PC-3 (cell line): ENCODE measurements at regions of chr20 and their contacts with region 1.

Region 1: GRCh38 chr20:3710703-3711483 is 1.5 kb downstream of the SIGLEC1 start:
- DNase-seq: peak; percentile 61
- ATAC-seq: peak; percentile 33
- H3K4me3 ChIP-seq: no peak overlapping the region
- H3K27ac ChIP-seq: no peak overlapping the region
- H3K4me1 ChIP-seq: no peaks in the 10 kb centered on the region
- H3K27me3 ChIP-seq: no peaks in the 10 kb centered on the region
- CTCF ChIP-seq: peak; percentile 98

Region 2: DNA sequence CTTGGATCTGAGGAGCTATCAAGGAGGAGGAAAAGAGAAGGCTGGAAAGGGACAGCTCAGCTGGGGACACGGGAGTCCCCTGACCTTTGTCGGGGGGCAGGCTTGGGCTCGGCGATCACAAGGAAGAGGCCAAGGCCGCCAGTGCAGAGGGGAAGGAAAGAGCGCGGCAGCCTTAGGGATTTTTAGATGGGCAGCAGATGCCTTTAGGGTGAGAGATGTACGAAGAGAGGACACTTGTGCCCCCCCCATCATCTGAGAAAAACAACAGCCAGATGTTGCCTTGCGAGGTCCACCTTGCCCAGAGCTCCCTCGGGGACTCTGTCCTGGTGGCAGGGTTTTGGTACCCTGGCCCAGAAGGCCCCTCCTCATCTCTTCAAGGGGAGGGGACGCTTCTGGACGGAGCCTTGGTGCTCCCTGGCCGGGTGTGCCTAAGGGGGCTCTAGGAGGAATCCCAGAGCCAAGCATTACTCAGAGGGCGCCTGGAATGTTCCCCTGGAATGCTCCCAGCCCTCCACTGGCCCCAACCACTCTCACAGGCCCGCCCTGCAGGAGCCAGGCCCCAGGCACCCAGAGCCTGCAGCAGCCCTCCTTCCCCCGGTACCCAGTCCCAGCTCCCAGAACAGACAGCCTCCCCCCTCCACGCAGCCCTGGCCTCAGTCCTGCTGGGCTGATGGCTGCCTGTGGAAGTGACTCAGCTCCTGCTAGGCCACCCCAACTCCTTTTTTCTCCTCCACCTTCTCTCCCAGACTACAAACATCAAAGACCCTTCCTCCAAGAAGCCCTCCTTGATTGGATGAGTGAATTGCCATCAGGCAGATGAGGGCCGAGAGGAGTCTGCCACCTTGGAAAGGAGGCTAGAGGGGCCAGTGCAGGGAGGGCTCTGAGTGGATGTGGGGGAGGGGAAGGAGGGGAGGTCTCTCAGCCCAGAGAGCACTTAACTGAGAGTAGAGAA is 30.9 kb before region 1 on chr20:
- CTCF ChIA-PET with region 1: interaction called, 22 read pairs
- POLR2A ChIA-PET with region 1: no interaction called
- intact Hi-C with region 1: loop called (anchors 1 kb)
- DNase-seq: no peak
- ATAC-seq: no peak
- H3K4me3 ChIP-seq: no peak overlapping the region
- H3K27ac ChIP-seq: no peak overlapping the region
- H3K4me1 ChIP-seq: peaks cover 3% of the 10 kb centered on the region; the same call in 1 of the 2 replicates
- H3K27me3 ChIP-seq: peaks cover 24% of the 10 kb centered on the region
- CTCF ChIP-seq: no peak

Region 3: GRCh38 chr20:3696200-3696599 is 14.7 kb before region 1 on chr20:
- CTCF ChIA-PET with region 1: interaction called, 12 read pairs
- POLR2A ChIA-PET with region 1: interaction called, 33 read pairs
- intact Hi-C with region 1: no loop called
- DNase-seq: peak; percentile 57
- ATAC-seq: no peak
- H3K4me3 ChIP-seq: no peak overlapping the region
- H3K27ac ChIP-seq: no peak overlapping the region
- H3K4me1 ChIP-seq: no peaks in the 10 kb centered on the region
- H3K27me3 ChIP-seq: no peaks in the 10 kb centered on the region
- CTCF ChIP-seq: peak; percentile 68

Region 4: GRCh38 chr20:3753098-3753980 is 42.4 kb after region 1 on chr20:
- CTCF ChIA-PET with region 1: no interaction called
- POLR2A ChIA-PET with region 1: no interaction called
- intact Hi-C with region 1: no loop called
- DNase-seq: peak; percentile 68
- ATAC-seq: peak; percentile 80
- H3K4me3 ChIP-seq: no peak overlapping the region
- H3K27ac ChIP-seq: no peak overlapping the region
- H3K4me1 ChIP-seq: no peaks in the 10 kb centered on the region
- H3K27me3 ChIP-seq: no peaks in the 10 kb centered on the region
- CTCF ChIP-seq: peak; percentile 88